ENCODE measurements at regions of chr11 and their contacts with region 1.

Region 1: DNA sequence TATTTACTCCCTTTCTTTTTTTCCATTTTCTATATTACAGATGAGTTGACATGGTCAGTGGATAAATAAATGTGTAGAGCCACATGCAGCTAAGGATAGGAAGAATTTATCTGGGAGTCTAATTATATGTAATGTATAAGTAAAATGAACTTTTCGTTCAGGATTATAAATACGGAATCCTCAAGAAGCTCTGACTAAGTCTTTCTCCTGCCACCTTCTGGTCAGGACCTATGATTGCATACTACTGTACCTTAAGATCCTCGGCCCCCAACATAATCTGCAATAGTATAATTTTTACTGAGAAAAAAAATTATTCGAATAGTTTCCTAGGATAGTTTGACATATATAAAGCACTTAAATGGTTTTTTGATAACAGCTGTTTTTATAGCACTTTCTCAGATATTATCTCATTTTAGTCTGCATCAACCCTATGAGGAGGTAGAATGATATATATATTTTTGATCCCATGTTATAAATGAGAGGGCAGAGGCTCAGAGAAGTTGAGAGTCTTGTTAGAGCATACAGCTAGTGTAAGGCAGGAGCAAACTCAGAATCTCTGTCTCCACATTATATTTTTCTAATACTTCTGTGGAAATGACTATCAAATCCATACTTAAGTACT is 36.1 kb downstream of the CCDC90B start:
- DNase-seq: no peak
- H3K4me3 ChIP-seq: no peak overlapping the region
- H3K27ac ChIP-seq: no peak overlapping the region
- H3K4me1 ChIP-seq: peaks cover 0 to 33% (median 0%) of the 10 kb centered on the region in 4 donors
- H3K27me3 ChIP-seq: no peaks in the 10 kb centered on the region
- CTCF ChIP-seq: peak; percentile 65 to 67

Region 2: GRCh38 chr11:82906244-82906654 is 343.8 kb before region 1 on chr11:
- intact Hi-C with region 1: loop called (anchors 5 kb)
- DNase-seq: no peak
- H3K4me3 ChIP-seq: no peak overlapping the region
- H3K27ac ChIP-seq: no peak overlapping the region
- H3K4me1 ChIP-seq: peaks cover 0 to 8% (median 5%) of the 10 kb centered on the region in 4 donors
- H3K27me3 ChIP-seq: no peaks in the 10 kb centered on the region
- CTCF ChIP-seq: peak; percentile 55 to 60